ENCODE measurements at regions of chr18 and their contacts with region 1.

Region 1: DNA sequence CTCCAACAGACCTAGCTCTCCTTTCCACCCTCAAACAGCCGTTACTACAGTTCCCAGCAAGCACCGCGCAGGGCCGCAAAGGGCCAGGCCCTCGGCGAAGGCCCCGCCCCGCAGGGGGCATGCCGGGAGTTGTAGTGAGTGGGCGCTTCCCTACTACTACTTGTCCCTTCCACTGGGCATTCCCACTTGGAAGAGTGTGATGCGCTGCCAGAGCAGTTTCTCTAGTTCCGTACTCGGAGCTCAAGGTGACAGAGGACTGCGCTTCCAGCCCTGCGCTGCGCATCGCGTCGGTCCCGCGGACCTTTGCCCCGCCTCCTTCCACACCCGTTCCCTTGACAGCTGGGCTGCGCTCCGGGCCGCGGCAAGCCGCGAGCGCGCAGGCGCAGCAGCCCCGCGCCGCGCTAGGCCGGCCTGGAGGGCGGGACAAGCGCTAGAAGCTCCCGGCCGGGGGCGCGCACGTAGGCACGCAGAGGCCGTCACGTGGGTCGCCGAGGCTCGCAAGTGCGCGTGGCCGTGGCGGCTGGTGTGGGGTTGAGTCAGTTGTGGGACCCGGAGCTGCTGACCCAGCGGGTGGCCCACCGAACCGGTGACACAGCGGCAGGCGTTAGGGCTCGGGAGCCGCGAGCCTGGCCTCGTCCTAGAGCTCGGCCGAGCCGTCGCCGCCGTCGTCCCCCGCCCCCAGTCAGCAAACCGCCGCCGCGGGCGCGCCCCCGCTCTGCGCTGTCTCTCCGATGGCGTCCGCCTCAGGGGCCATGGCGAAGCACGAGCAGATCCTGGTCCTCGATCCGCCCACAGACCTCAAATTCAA is at the start of gene VAPA:
- DNase-seq: peak; percentile 94
- H3K4me3 Mint-ChIP-seq: peak within 1 kb of the TSS; percentile 81
- H3K27ac Mint-ChIP-seq: peak within 1 kb of the TSS; percentile 90
- H3K4me1 Mint-ChIP-seq: peaks cover 28% of the 10 kb centered on the region
- H3K27me3 Mint-ChIP-seq: peaks cover 16% of the 10 kb centered on the region
- total RNA-seq, gene VAPA: 132 to 142 TPM

Region 2: GRCh38 chr18:9561759-9562158 is 352.0 kb before region 1 on chr18:
- CTCF ChIA-PET with region 1: no interaction called
- POLR2A ChIA-PET with region 1: no interaction called
- DNase-seq: no peak
- H3K4me3 Mint-ChIP-seq: no peak overlapping the region
- H3K27ac Mint-ChIP-seq: no peak overlapping the region
- H3K4me1 Mint-ChIP-seq: no peaks in the 10 kb centered on the region
- H3K27me3 Mint-ChIP-seq: no peaks in the 10 kb centered on the region

Region 3: GRCh38 chr18:9614401-9615279 is 299.1 kb before region 1 on chr18 and contains the start of gene PPP4R1:
- CTCF ChIA-PET with region 1: interaction called, 8 read pairs
- POLR2A ChIA-PET with region 1: interaction called, 12 read pairs
- DNase-seq: peak; percentile 72
- H3K4me3 Mint-ChIP-seq: peak within 1 kb of the TSS; percentile 93
- H3K27ac Mint-ChIP-seq: peak within 1 kb of the TSS; percentile 81
- H3K4me1 Mint-ChIP-seq: peaks cover 59% of the 10 kb centered on the region
- H3K27me3 Mint-ChIP-seq: no peaks in the 10 kb centered on the region
- total RNA-seq, gene PPP4R1: 54.0 to 59.7 TPM

Region 4: DNA sequence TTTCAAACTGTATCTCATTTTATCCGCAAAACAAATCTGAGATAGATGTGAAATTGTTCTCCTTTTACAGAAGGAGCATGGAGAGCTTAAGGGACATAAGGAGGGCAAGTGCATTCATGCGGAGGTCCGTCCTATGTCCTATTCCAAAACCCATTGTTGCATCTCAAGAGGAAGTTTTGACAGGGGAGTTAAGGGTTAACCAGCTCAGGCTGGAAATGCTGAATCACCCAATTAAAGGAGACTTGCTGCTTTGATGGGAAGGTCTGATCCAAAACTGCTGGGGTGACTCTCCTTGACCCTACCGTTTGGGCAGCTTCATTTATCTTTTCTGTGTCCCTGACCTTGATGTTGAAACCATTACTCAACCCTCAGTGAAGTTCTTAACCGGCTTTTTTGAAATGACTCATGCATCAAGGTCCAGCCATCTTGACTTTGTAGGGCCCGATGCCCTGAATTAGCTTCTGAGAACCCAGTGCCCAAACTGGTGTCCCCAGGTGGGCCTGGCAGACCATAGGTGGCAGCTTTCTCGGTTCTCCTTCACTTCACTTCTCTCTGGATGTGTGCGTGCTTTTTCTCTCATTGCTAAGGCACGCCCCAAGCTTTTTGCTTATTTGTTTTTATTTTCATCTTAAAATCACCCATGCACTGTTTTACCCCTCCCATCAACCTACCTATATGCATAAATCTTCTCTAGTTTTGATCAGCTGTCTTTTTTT is 43.9 kb before region 1 on chr18:
- CTCF ChIA-PET with region 1: no interaction called
- POLR2A ChIA-PET with region 1: interaction called, 15 read pairs
- DNase-seq: no peak
- H3K4me3 Mint-ChIP-seq: no peak overlapping the region
- H3K27ac Mint-ChIP-seq: no peak overlapping the region
- H3K4me1 Mint-ChIP-seq: peaks cover 31% of the 10 kb centered on the region
- H3K27me3 Mint-ChIP-seq: peaks cover 4% of the 10 kb centered on the region

Region 5: GRCh38 chr18:9898792-9899549 is 14.8 kb before region 1 on chr18:
- CTCF ChIA-PET with region 1: no interaction called
- POLR2A ChIA-PET with region 1: interaction called, 12 read pairs
- DNase-seq: no peak
- H3K4me3 Mint-ChIP-seq: no peak overlapping the region
- H3K27ac Mint-ChIP-seq: no peak overlapping the region
- H3K4me1 Mint-ChIP-seq: peaks cover 30% of the 10 kb centered on the region
- H3K27me3 Mint-ChIP-seq: peaks cover 4% of the 10 kb centered on the region

Region 6: GRCh38 chr18:9958861-9959399 is 45.2 kb after region 1 on chr18:
- CTCF ChIA-PET with region 1: no interaction called
- POLR2A ChIA-PET with region 1: interaction called, 15 read pairs
- DNase-seq: no peak
- H3K4me3 Mint-ChIP-seq: no peak overlapping the region
- H3K27ac Mint-ChIP-seq: no peak overlapping the region
- H3K4me1 Mint-ChIP-seq: no peaks in the 10 kb centered on the region
- H3K27me3 Mint-ChIP-seq: peaks cover 3% of the 10 kb centered on the region